Caco-2 (cell line): ENCODE measurements at regions of chr7 and their contacts with region 1.

Region 1: GRCh38 chr7:150404805-150405583 is 25.9 kb downstream of the ZNF775 start:
- DNase-seq: peak; percentile 90 to 93
- H3K4me3 ChIP-seq: peak overlapping the region; percentile 83
- H3K4me3 Mint-ChIP-seq: peak overlapping the region; percentile 88
- H3K27ac Mint-ChIP-seq: peak overlapping the region; percentile 45
- H3K4me1 ChIP-seq: peaks cover 49% of the 10 kb centered on the region
- H3K4me1 Mint-ChIP-seq: peaks cover 42% of the 10 kb centered on the region
- H3K27me3 ChIP-seq: no peaks in the 10 kb centered on the region
- H3K27me3 Mint-ChIP-seq: no peaks in the 10 kb centered on the region
- CTCF ChIP-seq: peak in 1 of 2 experiments; percentile 18

Region 2: GRCh38 chr7:149811221-149811620 is 593.8 kb before region 1 on chr7:
- CTCF ChIA-PET with region 1: no interaction called
- POLR2A ChIA-PET with region 1: no interaction called
- intact Hi-C with region 1: no loop called
- DNase-seq: no peak
- H3K4me3 ChIP-seq: no peak overlapping the region
- H3K4me3 Mint-ChIP-seq: no peak overlapping the region
- H3K27ac Mint-ChIP-seq: no peak overlapping the region
- H3K4me1 ChIP-seq: no peaks in the 10 kb centered on the region
- H3K4me1 Mint-ChIP-seq: no peaks in the 10 kb centered on the region
- H3K27me3 ChIP-seq: no peaks in the 10 kb centered on the region; the same call in 1 of the 2 replicates
- H3K27me3 Mint-ChIP-seq: peaks cover 7% of the 10 kb centered on the region
- CTCF ChIP-seq: peak; percentile 12 to 24

Region 3: DNA sequence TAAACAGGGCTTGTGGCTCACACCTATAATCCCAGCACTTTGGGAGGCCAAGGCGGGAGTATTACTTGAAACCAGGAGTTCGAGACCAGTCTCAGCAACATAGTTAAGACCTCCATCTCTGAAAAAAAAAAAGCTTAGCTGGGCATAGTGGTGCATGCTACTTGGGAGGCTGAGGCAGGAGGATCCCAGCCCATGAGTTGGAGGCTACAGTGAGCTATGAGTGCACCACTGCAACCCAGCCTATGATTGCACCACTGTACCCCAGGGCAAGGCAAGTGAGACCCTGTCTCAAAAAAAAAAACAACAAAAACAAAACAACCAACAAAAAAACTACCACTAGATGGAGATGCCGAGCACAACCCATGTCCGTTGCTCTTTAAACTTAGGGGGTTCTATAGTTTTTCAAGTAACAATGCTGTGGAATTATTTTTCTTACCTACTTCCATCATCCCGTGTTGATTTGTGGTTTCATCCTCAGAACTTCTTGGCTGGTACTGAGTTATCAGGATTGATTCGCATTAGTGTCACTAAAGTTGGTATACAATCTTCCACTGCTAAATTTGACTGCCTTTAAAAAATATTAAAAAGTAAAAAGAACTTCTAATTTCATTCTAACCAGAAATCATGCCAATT is 48.6 kb before region 1 on chr7:
- CTCF ChIA-PET with region 1: no interaction called
- POLR2A ChIA-PET with region 1: no interaction called
- intact Hi-C with region 1: loop called (anchors 1 kb)
- DNase-seq: peak in 1 of 2 experiments; percentile 42
- H3K4me3 ChIP-seq: no peak overlapping the region
- H3K4me3 Mint-ChIP-seq: no peak overlapping the region
- H3K27ac Mint-ChIP-seq: no peak overlapping the region
- H3K4me1 ChIP-seq: no peaks in the 10 kb centered on the region
- H3K4me1 Mint-ChIP-seq: peaks cover 11% of the 10 kb centered on the region
- H3K27me3 ChIP-seq: no peaks in the 10 kb centered on the region
- H3K27me3 Mint-ChIP-seq: no peaks in the 10 kb centered on the region
- CTCF ChIP-seq: peak; percentile 68 to 73

Region 4: GRCh38 chr7:150368096-150368883 is 36.7 kb before region 1 on chr7 and contains the start of gene REPIN1:
- CTCF ChIA-PET with region 1: no interaction called
- POLR2A ChIA-PET with region 1: interaction called, 6 read pairs
- intact Hi-C with region 1: loop called (anchors 1 kb)
- DNase-seq: peak; percentile 95 to 96
- H3K4me3 ChIP-seq: peak within 1 kb of the TSS; percentile 91
- H3K4me3 Mint-ChIP-seq: peak within 1 kb of the TSS; percentile 88
- H3K27ac Mint-ChIP-seq: peak within 1 kb of the TSS; percentile 99
- H3K4me1 ChIP-seq: peaks cover 17% of the 10 kb centered on the region
- H3K4me1 Mint-ChIP-seq: peaks cover under 1% of the 10 kb centered on the region
- H3K27me3 ChIP-seq: no peaks in the 10 kb centered on the region
- H3K27me3 Mint-ChIP-seq: no peaks in the 10 kb centered on the region
- CTCF ChIP-seq: no peak
- total RNA-seq, gene REPIN1: 141 and 148 TPM in 2 replicates